ENCODE measurements at regions of chr2 and their contacts with region 1.

Region 1: DNA sequence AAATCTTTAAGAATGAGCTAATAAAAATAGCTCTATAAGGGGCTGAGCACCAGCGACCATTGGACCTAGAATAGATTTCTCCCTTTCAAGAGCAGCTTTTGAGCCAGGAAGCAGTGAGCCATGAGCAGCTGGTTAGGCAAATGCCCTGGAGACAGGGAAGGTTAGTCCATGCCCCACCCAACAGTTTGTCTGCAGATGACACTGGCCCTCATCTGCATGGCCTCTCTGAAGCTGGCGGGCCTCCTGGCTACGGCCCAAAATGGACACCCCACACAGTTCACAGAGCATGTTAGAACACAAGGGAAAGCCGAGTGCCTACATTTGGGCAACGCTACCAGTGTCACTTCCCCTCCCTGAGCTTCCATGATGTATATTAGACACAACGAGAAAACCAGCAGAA is 201.1 kb downstream of the MGAT5 start:
- DNase-seq: no peak
- H3K4me3 ChIP-seq: no peak overlapping the region
- H3K27ac ChIP-seq: no peak overlapping the region
- H3K4me1 ChIP-seq: peaks cover 5% of the 10 kb centered on the region
- H3K27me3 ChIP-seq: no peaks in the 10 kb centered on the region
- CTCF ChIP-seq: no peak
- POLR2A ChIP-seq: no peak

Region 2: GRCh38 chr2:133919285-133919684 is 535.6 kb before region 1 on chr2:
- CTCF ChIA-PET with region 1: no interaction called
- POLR2A ChIA-PET with region 1: no interaction called
- dilution Hi-C with region 1: no loop called
- intact Hi-C with region 1: no loop called
- DNase-seq: no peak
- H3K4me3 ChIP-seq: no peak overlapping the region
- H3K27ac ChIP-seq: no peak overlapping the region
- H3K4me1 ChIP-seq: no peaks in the 10 kb centered on the region
- H3K27me3 ChIP-seq: peaks cover 1 to 8% of the 10 kb centered on the region in 2 experiments
- CTCF ChIP-seq: no peak
- POLR2A ChIP-seq: no peak

Region 3: GRCh38 chr2:134207564-134208209 is 247.2 kb before region 1 on chr2:
- CTCF ChIA-PET with region 1: interaction called, 31 read pairs
- POLR2A ChIA-PET with region 1: no interaction called
- dilution Hi-C with region 1: no loop called
- intact Hi-C with region 1: loop called (anchors 5 kb)
- DNase-seq: peak; percentile 69
- H3K4me3 ChIP-seq: no peak overlapping the region
- H3K27ac ChIP-seq: no peak overlapping the region
- H3K4me1 ChIP-seq: peaks cover 5% of the 10 kb centered on the region
- H3K27me3 ChIP-seq: no peaks in the 10 kb centered on the region
- CTCF ChIP-seq: peak; percentile 75 to 85
- POLR2A ChIP-seq: no peak

Region 4: GRCh38 chr2:134253804-134254203 is 201.1 kb before region 1 on chr2 and contains the start of gene MGAT5:
- CTCF ChIA-PET with region 1: interaction called, 10 read pairs
- POLR2A ChIA-PET with region 1: no interaction called
- dilution Hi-C with region 1: no loop called
- intact Hi-C with region 1: no loop called
- DNase-seq: no peak
- H3K4me3 ChIP-seq: no peak within 1 kb of the TSS
- H3K27ac ChIP-seq: no peak within 1 kb of the TSS
- H3K4me1 ChIP-seq: peaks cover 16% of the 10 kb centered on the region
- H3K27me3 ChIP-seq: no peaks in the 10 kb centered on the region
- CTCF ChIP-seq: no peak
- POLR2A ChIP-seq: no peak
- total RNA-seq, gene MGAT5: 84.1 TPM in 2 replicates

Region 5: DNA sequence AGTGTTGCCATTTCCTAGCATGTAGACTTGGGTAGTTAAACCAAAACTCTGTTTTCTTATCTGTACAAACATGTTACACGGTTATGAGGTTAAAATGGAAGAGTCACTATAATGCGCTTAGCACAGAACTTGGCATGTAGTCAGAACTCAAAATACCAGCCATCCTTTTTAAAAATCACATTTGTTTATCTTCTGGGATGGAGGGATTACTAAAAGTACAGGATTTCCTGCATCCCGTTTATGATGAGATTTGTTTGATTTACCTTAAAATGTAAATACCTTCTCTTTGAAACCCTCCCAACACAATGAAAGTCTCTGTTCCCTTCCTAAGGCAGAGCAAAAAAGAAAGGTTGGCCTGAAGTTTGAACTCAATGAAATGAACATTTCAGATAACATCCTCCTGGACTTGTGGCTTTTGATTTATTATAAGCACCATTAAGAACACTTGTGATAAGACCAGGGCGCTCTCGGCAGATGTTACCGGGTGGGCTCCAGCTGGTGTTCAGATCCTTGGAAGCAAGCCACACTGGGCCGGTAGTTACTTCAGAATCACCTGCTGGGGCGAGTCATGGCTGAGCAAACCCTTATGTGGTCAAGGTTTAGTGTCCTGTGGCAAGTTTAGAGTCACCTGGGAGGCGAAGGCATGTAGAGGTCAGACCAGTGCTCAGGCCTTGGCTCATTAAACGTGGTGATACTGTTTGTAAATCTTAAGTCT is 95.4 kb before region 1 on chr2:
- CTCF ChIA-PET with region 1: interaction called, 10 read pairs
- POLR2A ChIA-PET with region 1: no interaction called
- dilution Hi-C with region 1: no loop called
- intact Hi-C with region 1: no loop called
- DNase-seq: peak; percentile 73
- H3K4me3 ChIP-seq: no peak overlapping the region
- H3K27ac ChIP-seq: peak overlapping the region; percentile 49
- H3K4me1 ChIP-seq: peaks cover 18% of the 10 kb centered on the region
- H3K27me3 ChIP-seq: no peaks in the 10 kb centered on the region
- CTCF ChIP-seq: no peak
- POLR2A ChIP-seq: no peak

Region 6: DNA sequence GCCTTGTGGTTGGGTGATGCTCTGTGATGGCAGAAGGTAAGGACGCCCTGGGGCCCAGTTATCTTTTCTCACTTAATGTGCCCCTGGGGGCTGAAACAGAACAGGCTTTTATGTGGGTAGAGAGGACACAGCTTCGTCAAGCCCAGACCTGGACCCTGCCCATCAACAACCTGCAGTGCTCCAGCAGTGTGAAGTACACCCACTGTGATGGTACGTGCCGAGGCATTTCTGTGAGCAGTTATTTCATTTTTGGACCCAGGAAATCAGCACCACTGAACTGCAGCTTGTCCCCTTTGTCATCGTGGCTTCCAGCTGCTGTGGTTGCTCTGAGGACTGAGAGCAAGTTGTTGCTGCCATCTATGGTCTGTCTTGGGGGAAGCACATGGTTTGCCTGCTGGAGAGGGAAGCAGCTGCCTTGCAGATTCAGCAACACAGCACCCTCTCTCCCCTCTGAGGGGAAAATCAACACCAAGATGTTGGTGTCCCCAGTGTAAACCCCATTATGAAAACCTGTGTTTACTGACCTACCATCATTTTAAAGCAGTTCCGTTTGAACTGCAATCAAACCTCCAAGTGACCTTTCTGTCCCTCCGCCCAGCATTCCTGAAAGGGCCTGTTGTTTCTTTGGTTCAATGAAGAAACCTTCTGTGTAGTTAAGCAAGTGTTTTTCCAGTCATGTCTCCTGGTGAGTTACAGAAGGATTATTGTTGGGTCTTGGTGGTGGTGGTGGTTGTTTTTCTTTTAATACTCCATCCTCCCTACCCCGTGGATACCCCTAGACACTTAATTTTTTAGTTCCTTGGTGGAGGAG is 42.9 kb before region 1 on chr2:
- CTCF ChIA-PET with region 1: interaction called, 139 read pairs
- POLR2A ChIA-PET with region 1: no interaction called
- dilution Hi-C with region 1: no loop called
- intact Hi-C with region 1: loop called (anchors 1 kb)
- DNase-seq: peak; percentile 73
- H3K4me3 ChIP-seq: no peak overlapping the region
- H3K27ac ChIP-seq: peak overlapping the region; percentile 56
- H3K4me1 ChIP-seq: peaks cover 45% of the 10 kb centered on the region
- H3K27me3 ChIP-seq: no peaks in the 10 kb centered on the region
- CTCF ChIP-seq: peak; percentile 61 to 77
- POLR2A ChIP-seq: no peak

Region 7: GRCh38 chr2:134468164-134468563 is 13.2 kb after region 1 on chr2:
- CTCF ChIA-PET with region 1: interaction called, 13 read pairs
- POLR2A ChIA-PET with region 1: no interaction called
- dilution Hi-C with region 1: no loop called
- intact Hi-C with region 1: no loop called
- DNase-seq: no peak
- H3K4me3 ChIP-seq: no peak overlapping the region
- H3K27ac ChIP-seq: no peak overlapping the region
- H3K4me1 ChIP-seq: no peaks in the 10 kb centered on the region
- H3K27me3 ChIP-seq: no peaks in the 10 kb centered on the region
- CTCF ChIP-seq: no peak
- POLR2A ChIP-seq: no peak

Measured in endothelial cell of umbilical vein (primary cell).